ENCODE measurements at regions of chr10 and their contacts with region 1.

Region 1: GRCh38 chr10:47165711-47166524 is 134.1 kb upstream of the GDF10 start:
- DNase-seq: peak; percentile 31 to 76 (median 46)
- ATAC-seq: peak; percentile 87
- H3K4me3 ChIP-seq: peak overlapping the region; percentile 61
- H3K4me3 Mint-ChIP-seq: peak overlapping the region; percentile 86
- H3K27ac ChIP-seq: peak overlapping the region; percentile 59 to 79
- H3K27ac Mint-ChIP-seq: peak overlapping the region; percentile 96
- H3K4me1 ChIP-seq: peaks cover 31% of the 10 kb centered on the region
- H3K4me1 Mint-ChIP-seq: peaks cover 38% of the 10 kb centered on the region
- H3K27me3 ChIP-seq: no peaks in the 10 kb centered on the region
- H3K27me3 Mint-ChIP-seq: no peaks in the 10 kb centered on the region
- CTCF ChIP-seq: no peak

Region 2: GRCh38 chr10:46273506-46274477 is 892.1 kb before region 1 on chr10:
- CTCF ChIA-PET with region 1: no interaction called
- POLR2A ChIA-PET with region 1: no interaction called
- intact Hi-C with region 1: no loop called
- DNase-seq: peak in 3 of 14 experiments; percentile 1 to 39 (median 29)
- ATAC-seq: no peak
- H3K4me3 ChIP-seq: no peak overlapping the region
- H3K4me3 Mint-ChIP-seq: no peak overlapping the region
- H3K27ac ChIP-seq: peak overlapping the region in 1 of 2 donors; percentile 68
- H3K27ac Mint-ChIP-seq: peak overlapping the region; percentile 83
- H3K4me1 ChIP-seq: peaks cover 45% of the 10 kb centered on the region
- H3K4me1 Mint-ChIP-seq: peaks cover 44% of the 10 kb centered on the region
- H3K27me3 ChIP-seq: no peaks in the 10 kb centered on the region
- H3K27me3 Mint-ChIP-seq: no peaks in the 10 kb centered on the region
- CTCF ChIP-seq: no peak

Region 3: GRCh38 chr10:47047671-47048525 is 118.0 kb before region 1 on chr10:
- CTCF ChIA-PET with region 1: interaction called, 3 read pairs
- POLR2A ChIA-PET with region 1: interaction called, 13 read pairs
- intact Hi-C with region 1: loop called (anchors 5 to 10 kb)
- DNase-seq: peak; percentile 60 to 87 (median 74)
- ATAC-seq: peak; percentile 60
- H3K4me3 ChIP-seq: no peak overlapping the region
- H3K4me3 Mint-ChIP-seq: no peak overlapping the region
- H3K27ac ChIP-seq: no peak overlapping the region
- H3K27ac Mint-ChIP-seq: no peak overlapping the region
- H3K4me1 ChIP-seq: peaks cover 17% of the 10 kb centered on the region
- H3K4me1 Mint-ChIP-seq: peaks cover 23% of the 10 kb centered on the region
- H3K27me3 ChIP-seq: no peaks in the 10 kb centered on the region
- H3K27me3 Mint-ChIP-seq: no peaks in the 10 kb centered on the region
- CTCF ChIP-seq: peak; percentile 86

Region 4: DNA sequence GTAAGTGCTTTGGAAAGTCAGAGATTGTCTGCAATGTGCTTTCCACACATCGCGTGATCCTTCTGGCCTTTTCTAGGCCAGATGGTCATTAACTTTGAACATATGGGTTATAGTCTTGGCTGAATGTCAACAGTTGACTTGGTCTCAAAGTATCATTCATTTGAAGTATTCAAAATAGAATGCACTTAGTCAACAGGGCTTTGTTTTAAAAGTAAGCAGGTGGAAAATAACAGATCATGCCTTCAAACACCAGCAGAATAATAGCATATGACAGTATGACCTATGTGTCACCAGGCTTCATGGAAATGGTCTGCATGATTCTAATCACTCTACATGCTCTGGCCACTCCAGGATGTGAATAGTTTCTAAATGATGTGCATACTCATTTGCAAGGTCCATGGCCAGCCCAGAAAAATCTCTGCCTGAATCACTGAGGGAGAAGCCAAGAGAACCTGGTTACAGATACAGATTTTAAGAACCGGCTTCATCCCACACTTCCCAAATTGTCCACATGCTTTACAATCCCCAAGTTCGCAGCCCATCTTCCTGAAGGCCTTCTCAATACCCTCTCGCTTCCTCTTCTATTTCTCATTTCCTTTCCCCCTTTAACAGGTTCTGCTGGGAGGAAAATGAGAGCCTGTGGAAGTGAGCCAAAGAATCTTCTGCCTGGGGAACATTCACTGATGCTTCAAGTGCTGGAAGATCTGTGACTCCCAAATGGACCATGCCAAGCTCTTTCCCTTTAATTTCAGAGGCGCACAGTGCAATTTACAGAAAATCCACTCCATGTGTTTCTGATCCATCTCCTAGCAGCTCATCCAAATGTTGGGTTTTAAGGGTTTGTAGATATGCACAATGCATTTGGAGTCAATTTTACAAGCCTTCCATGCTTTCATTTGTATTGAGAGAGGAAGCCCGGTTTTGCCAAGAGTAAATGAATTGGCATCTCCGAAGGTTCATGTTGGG is 11.3 kb after region 1 on chr10:
- CTCF ChIA-PET with region 1: no interaction called
- POLR2A ChIA-PET with region 1: interaction called, 16 read pairs
- intact Hi-C with region 1: no loop called
- DNase-seq: no peak
- ATAC-seq: no peak
- H3K4me3 ChIP-seq: no peak overlapping the region
- H3K4me3 Mint-ChIP-seq: no peak overlapping the region
- H3K27ac ChIP-seq: no peak overlapping the region
- H3K27ac Mint-ChIP-seq: no peak overlapping the region
- H3K4me1 ChIP-seq: peaks cover 3% of the 10 kb centered on the region
- H3K4me1 Mint-ChIP-seq: peaks cover 4% of the 10 kb centered on the region
- H3K27me3 ChIP-seq: no peaks in the 10 kb centered on the region
- H3K27me3 Mint-ChIP-seq: no peaks in the 10 kb centered on the region
- CTCF ChIP-seq: no peak

Region 5: DNA sequence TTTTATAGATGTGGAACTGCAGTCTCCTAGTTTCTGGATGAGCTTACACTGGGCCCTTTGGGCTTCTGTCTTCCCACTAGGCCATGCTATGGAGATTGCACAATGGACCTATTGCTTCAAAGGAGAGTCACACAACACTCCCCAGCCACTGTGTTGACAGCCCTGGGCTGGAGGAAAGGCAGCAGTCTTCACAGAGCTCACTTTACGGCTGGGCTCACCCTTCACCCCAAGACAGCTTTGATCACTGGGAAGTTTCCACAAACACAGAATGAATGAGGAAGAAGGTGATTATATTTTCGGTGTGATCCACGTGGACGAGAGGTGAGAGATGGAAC is 41.3 kb after region 1 on chr10:
- CTCF ChIA-PET with region 1: no interaction called
- POLR2A ChIA-PET with region 1: interaction called, 17 read pairs
- intact Hi-C with region 1: loop called in 1 of 2 experiments (anchors 5 kb)
- DNase-seq: peak in 5 of 14 experiments; percentile 9 to 52 (median 42)
- ATAC-seq: peak; percentile 57
- H3K4me3 ChIP-seq: peak overlapping the region; percentile 28
- H3K4me3 Mint-ChIP-seq: peak overlapping the region; percentile 65
- H3K27ac ChIP-seq: peak overlapping the region; percentile 60 to 74
- H3K27ac Mint-ChIP-seq: peak overlapping the region; percentile 82
- H3K4me1 ChIP-seq: peaks cover 46% of the 10 kb centered on the region
- H3K4me1 Mint-ChIP-seq: peaks cover 70% of the 10 kb centered on the region
- H3K27me3 ChIP-seq: no peaks in the 10 kb centered on the region
- H3K27me3 Mint-ChIP-seq: no peaks in the 10 kb centered on the region
- CTCF ChIP-seq: no peak

Region 6: DNA sequence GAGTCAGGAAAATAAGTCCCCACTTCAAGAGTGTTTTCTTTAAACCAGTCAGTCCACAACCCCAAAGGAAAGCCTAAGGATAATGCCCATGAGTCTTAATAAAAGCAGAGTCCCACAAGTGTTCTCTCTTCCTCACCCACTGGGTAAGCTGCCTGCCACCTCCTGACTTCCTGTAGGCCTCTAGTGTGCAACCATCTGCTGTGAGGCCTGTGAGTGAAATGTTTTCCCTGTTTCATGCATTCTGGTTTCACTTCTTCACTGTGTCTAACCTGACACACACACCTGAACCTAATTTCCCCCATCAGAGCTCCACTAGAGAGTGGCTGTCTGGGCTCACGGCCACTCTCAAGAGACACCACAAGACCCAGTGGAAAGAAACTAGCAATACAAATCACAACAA is 95.2 kb after region 1 on chr10:
- CTCF ChIA-PET with region 1: no interaction called
- POLR2A ChIA-PET with region 1: interaction called, 21 read pairs
- intact Hi-C with region 1: loop called (anchors 5 kb)
- DNase-seq: peak in 13 of 14 experiments; percentile 18 to 73 (median 44)
- ATAC-seq: peak; percentile 61
- H3K4me3 ChIP-seq: no peak overlapping the region
- H3K4me3 Mint-ChIP-seq: peak overlapping the region; percentile 11
- H3K27ac ChIP-seq: peak overlapping the region; percentile 44 to 77
- H3K27ac Mint-ChIP-seq: peak overlapping the region; percentile 93
- H3K4me1 ChIP-seq: peaks cover 75% of the 10 kb centered on the region
- H3K4me1 Mint-ChIP-seq: peaks cover 96% of the 10 kb centered on the region
- H3K27me3 ChIP-seq: no peaks in the 10 kb centered on the region
- H3K27me3 Mint-ChIP-seq: no peaks in the 10 kb centered on the region
- CTCF ChIP-seq: no peak